ENCODE measurements at regions of chr6 and their contacts with region 1.

Region 1: DNA sequence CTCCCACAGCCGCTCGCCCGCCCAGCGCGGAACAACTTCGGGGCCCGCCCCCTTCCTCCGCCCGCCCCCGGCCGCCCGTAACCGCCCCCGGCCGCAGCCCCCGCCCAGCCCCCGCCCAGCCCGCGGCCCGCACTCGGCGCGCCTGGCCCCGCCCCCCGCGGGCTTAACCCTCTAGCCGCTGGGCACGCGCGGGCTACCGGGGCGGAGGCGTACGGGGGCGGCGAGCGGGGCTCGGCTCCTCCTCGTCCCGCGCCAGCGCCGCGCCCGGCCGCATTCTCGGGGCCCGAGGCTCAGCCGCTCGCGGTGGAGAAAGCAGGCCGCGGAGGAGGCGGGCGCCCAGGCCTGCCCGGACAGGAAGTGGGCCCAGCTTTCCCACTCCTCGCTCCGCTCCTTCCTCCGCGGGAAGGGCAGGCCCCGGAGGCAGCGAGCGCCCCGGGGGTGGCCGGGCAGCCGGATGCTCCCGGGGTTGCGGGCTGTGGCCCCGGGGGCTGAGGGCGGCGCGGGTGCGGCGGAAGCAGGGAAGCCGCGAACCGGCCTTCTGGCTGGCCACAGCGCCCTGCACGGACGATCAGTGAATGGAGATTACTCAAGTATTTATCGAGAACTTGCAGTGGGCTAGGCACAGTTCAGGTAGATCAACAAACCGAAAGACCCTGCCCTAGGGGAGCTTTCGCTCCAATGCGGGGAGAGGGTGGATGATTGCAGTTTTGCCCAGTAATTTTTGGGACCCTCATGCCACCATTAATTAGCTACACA is at the start of gene TRAM2:
- DNase-seq: peak; percentile 87 to 93
- H3K4me3 ChIP-seq: peak within 1 kb of the TSS; percentile 80
- H3K4me3 Mint-ChIP-seq: peak within 1 kb of the TSS; percentile 81
- H3K27ac Mint-ChIP-seq: peak within 1 kb of the TSS; percentile 81
- H3K4me1 ChIP-seq: peaks cover 60% of the 10 kb centered on the region
- H3K4me1 Mint-ChIP-seq: peaks cover 48% of the 10 kb centered on the region
- H3K27me3 ChIP-seq: no peaks in the 10 kb centered on the region
- H3K27me3 Mint-ChIP-seq: no peaks in the 10 kb centered on the region
- CTCF ChIP-seq: no peak
- total RNA-seq, gene TRAM2: 63.8 and 71.6 TPM in 2 replicates

Region 2: GRCh38 chr6:52517502-52518278 is 59.5 kb before region 1 on chr6:
- CTCF ChIA-PET with region 1: no interaction called
- POLR2A ChIA-PET with region 1: no interaction called
- intact Hi-C with region 1: loop called (anchors 5 kb)
- DNase-seq: peak; percentile 29 to 47
- H3K4me3 ChIP-seq: no peak overlapping the region
- H3K4me3 Mint-ChIP-seq: no peak overlapping the region
- H3K27ac Mint-ChIP-seq: peak overlapping the region; percentile 86
- H3K4me1 ChIP-seq: peaks cover 41% of the 10 kb centered on the region
- H3K4me1 Mint-ChIP-seq: peaks cover 47% of the 10 kb centered on the region
- H3K27me3 ChIP-seq: no peaks in the 10 kb centered on the region
- H3K27me3 Mint-ChIP-seq: no peaks in the 10 kb centered on the region
- CTCF ChIP-seq: no peak

Region 3: DNA sequence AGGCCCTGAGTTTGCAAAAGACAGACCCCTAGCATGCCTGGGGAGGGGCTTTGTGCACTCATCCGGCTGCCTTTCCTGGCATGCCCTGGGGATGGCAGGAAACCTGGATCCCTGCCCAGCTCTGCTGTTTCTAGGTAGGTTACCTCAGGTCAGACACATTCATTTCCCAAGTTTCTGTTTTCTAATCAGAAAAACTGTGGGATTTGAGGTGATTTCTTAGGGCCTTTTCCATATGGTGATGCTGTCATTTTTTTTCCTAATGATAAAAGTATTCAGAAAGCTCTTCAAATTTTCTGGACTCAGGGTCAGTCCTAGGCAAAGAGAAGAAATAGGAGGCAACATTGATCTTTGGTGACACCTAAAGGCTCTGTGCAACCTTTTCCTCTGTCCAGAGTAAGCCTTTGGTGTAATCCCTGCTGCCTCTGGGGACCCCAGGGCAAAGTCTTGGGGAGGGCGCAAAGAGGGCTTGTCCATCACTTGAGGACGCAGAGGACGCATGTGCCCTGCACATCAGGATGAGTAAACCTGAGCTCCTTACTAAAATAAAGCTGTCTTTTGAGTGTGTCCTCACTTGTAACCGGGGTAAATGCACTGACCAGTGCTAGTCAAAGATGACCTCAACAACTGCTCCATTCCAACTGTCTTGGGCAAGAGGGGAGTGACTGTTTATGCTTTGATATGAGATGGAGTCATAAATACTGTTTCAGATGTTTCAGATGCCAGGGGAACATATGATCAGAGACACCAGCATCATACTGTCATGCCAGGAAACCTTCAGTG is 13.1 kb after region 1 on chr6:
- CTCF ChIA-PET with region 1: interaction called, 13 read pairs
- POLR2A ChIA-PET with region 1: interaction called, 9 read pairs
- intact Hi-C with region 1: loop called (anchors 1 kb)
- DNase-seq: peak in 1 of 2 experiments; percentile 58
- H3K4me3 ChIP-seq: no peak overlapping the region
- H3K4me3 Mint-ChIP-seq: no peak overlapping the region
- H3K27ac Mint-ChIP-seq: peak overlapping the region; percentile 10
- H3K4me1 ChIP-seq: peaks cover 41% of the 10 kb centered on the region
- H3K4me1 Mint-ChIP-seq: peaks cover 40% of the 10 kb centered on the region
- H3K27me3 ChIP-seq: no peaks in the 10 kb centered on the region
- H3K27me3 Mint-ChIP-seq: no peaks in the 10 kb centered on the region
- CTCF ChIP-seq: peak; percentile 31 to 54

Measured in Caco-2 (cell line).